ENCODE measurements at regions of chr4 and their contacts with region 1.

Region 1: GRCh38 chr4:140049024-140049848 is 104.7 kb downstream of the MAML3 start:
- DNase-seq: peak; percentile 62
- ATAC-seq: peak; percentile 76
- H3K4me3 ChIP-seq: peak overlapping the region; percentile 64
- H3K27ac ChIP-seq: peak overlapping the region; percentile 68
- H3K4me1 ChIP-seq: peaks cover 45% of the 10 kb centered on the region
- H3K27me3 ChIP-seq: no peaks in the 10 kb centered on the region
- CTCF ChIP-seq: no peak; the same call in 1 of the 2 replicates

Region 2: GRCh38 chr4:140018931-140019618 is 30.2 kb before region 1 on chr4:
- CTCF ChIA-PET with region 1: no interaction called
- POLR2A ChIA-PET with region 1: no interaction called
- intact Hi-C with region 1: loop called (anchors 2 kb)
- DNase-seq: peak; percentile 87
- ATAC-seq: peak; percentile 90
- H3K4me3 ChIP-seq: peak overlapping the region; percentile 36; the same call in 1 of the 2 replicates
- H3K27ac ChIP-seq: peak overlapping the region; percentile 94
- H3K4me1 ChIP-seq: peaks cover 37% of the 10 kb centered on the region
- H3K27me3 ChIP-seq: no peaks in the 10 kb centered on the region
- CTCF ChIP-seq: no peak

Region 3: GRCh38 chr4:140085062-140085622 is 35.9 kb after region 1 on chr4:
- CTCF ChIA-PET with region 1: interaction called, 3 read pairs
- POLR2A ChIA-PET with region 1: no interaction called
- intact Hi-C with region 1: loop called (anchors 2 kb)
- DNase-seq: peak; percentile 80
- ATAC-seq: peak; percentile 89
- H3K4me3 ChIP-seq: peak overlapping the region; percentile 54
- H3K27ac ChIP-seq: peak overlapping the region; percentile 95
- H3K4me1 ChIP-seq: peaks cover 36% of the 10 kb centered on the region
- H3K27me3 ChIP-seq: no peaks in the 10 kb centered on the region
- CTCF ChIP-seq: no peak